ENCODE measurements at regions of chr6 and their contacts with region 1.

Region 1: GRCh38 chr6:43013843-43014433 is at the starts of genes KLHDC3 and MEA1:
- DNase-seq: peak; percentile 97 to 99
- ATAC-seq: peak; percentile 92 to 97 (median 96)
- H3K4me3 ChIP-seq: peak within 1 kb of the TSS; percentile 65 to 85 (median 76)
- H3K27ac ChIP-seq: peak within 1 kb of the TSS; percentile 47 to 90 (median 87)
- H3K4me1 ChIP-seq: peaks cover 12 to 63% (median 50%) of the 10 kb centered on the region in 9 donors
- H3K27me3 ChIP-seq: no peaks in the 10 kb centered on the region
- CTCF ChIP-seq: no peak
- total RNA-seq, gene KLHDC3: 78.2 to 165 (median 92.0) TPM
- total RNA-seq, gene MEA1: 22.9 to 38.7 (median 28.3) TPM

Region 2: DNA sequence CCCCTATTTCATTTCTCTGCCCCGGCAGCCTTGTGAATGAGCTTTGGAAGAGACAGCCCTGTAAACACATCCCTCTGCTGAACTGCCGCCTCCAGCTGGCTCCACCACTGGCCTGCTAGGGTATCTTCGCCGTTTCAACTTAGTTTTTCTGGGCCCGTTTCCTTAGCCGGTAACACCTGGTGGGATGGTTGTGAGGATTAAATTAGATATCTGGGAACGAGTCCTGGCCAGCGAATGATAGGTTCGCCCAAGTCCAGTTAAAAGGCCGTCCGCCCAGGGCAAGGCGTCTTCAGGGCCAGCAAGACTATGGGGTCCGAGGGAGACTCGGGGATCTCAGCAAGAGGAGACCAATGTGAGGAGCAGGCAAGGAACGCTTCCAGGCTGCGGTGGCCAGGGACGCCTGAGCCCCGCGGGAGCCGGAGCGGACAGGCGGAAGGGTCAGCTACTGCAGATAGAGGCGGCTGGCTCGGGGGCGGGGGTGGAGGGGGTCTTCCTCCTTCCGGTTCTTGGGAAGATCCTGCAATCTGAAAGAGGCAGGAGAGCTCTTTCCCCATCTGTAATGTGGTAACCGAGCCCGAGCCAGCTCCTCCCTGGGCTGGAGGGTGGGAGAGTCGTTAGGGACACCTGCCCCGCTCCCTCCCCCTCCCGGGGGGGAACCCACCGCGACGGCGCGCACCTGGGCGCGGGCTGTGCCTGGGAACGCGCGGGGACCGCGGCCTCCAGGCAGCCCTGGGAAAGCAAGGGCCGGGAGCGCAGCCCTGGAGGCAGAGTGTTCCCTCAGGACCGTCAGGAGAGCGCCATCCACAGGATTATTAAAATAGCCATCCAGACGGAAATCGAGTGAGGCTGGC is 102.5 kb before region 1 on chr6:
- intact Hi-C with region 1: loop called in 1 of 10 experiments (anchors 10 kb)
- DNase-seq: no peak
- ATAC-seq: no peak
- H3K4me3 ChIP-seq: peak overlapping the region in 8 of 10 donors; percentile 7 to 39 (median 36)
- H3K27ac ChIP-seq: no peak overlapping the region
- H3K4me1 ChIP-seq: peaks cover 0 to 16% (median 7%) of the 10 kb centered on the region in 9 donors
- H3K27me3 ChIP-seq: peaks cover 0 to 31% (median 19%) of the 10 kb centered on the region in 7 donors
- CTCF ChIP-seq: no peak

Region 3: GRCh38 chr6:43053545-43054205 is 39.7 kb after region 1 on chr6 and contains the start of gene CUL7:
- intact Hi-C with region 1: loop called in 6 of 10 experiments (anchors 2 to 5 kb)
- DNase-seq: peak; percentile 93 to 94
- ATAC-seq: peak; percentile 94 to 97 (median 96)
- H3K4me3 ChIP-seq: peak within 1 kb of the TSS; percentile 40 to 78 (median 64)
- H3K27ac ChIP-seq: peak within 1 kb of the TSS; percentile 63 to 98 (median 96)
- H3K4me1 ChIP-seq: peaks cover 4 to 36% (median 26%) of the 10 kb centered on the region in 9 donors
- H3K27me3 ChIP-seq: no peaks in the 10 kb centered on the region
- CTCF ChIP-seq: peak in 2 of 9 donors; percentile 3 to 20
- total RNA-seq, gene CUL7: 7.1 to 11.2 (median 8.6) TPM

Region 4: DNA sequence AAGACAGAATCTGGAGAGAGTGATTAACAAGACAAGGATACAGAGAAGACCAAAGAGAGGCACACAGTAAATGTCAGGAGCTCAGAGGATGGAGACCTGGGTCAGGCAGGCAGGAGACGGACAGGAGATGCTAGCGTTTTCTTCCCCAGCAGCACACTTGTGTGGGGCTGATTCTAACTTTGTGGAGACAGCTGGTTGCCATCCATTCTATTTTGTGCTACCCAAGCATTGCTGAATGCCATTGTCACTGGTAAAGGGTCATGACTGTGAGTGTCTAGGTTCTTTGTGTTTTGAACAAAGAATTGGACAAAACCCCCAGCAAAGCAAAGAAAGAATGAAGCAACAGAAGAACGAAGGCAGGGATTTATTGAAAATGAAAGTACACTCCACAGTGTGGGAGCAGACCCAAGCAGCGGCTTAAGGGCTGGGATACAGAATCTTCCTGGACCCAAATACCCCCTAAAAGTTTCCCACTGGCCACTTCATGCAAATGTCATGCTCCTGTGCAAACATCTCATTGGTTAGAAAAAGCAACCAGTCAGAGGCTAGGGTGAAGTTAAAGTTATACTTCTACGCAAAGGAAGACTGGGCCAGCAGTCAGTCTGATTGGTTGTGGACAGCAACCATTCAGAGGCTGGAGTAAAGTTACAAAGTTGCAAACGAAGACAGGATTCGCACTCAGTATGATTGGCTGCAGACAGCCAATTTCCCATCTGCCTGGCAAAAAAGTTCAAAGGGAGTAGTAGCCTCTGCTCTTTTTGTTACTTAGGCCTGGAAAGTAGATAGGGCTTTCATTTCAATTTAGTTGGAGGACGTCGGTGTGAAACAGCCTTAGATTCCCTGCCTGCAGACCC is 79.7 kb after region 1 on chr6:
- intact Hi-C with region 1: no loop called
- DNase-seq: peak in 1 of 2 donors; percentile 21
- ATAC-seq: peak in 7 of 8 donors; percentile 60 to 86 (median 80)
- H3K4me3 ChIP-seq: peak overlapping the region in 7 of 10 donors; percentile 13 to 42 (median 37)
- H3K27ac ChIP-seq: peak overlapping the region in 3 of 10 donors; percentile 9 to 36 (median 9)
- H3K4me1 ChIP-seq: peaks cover 0 to 21% (median 4%) of the 10 kb centered on the region in 9 donors
- H3K27me3 ChIP-seq: no peaks in the 10 kb centered on the region
- CTCF ChIP-seq: no peak

Region 5: DNA sequence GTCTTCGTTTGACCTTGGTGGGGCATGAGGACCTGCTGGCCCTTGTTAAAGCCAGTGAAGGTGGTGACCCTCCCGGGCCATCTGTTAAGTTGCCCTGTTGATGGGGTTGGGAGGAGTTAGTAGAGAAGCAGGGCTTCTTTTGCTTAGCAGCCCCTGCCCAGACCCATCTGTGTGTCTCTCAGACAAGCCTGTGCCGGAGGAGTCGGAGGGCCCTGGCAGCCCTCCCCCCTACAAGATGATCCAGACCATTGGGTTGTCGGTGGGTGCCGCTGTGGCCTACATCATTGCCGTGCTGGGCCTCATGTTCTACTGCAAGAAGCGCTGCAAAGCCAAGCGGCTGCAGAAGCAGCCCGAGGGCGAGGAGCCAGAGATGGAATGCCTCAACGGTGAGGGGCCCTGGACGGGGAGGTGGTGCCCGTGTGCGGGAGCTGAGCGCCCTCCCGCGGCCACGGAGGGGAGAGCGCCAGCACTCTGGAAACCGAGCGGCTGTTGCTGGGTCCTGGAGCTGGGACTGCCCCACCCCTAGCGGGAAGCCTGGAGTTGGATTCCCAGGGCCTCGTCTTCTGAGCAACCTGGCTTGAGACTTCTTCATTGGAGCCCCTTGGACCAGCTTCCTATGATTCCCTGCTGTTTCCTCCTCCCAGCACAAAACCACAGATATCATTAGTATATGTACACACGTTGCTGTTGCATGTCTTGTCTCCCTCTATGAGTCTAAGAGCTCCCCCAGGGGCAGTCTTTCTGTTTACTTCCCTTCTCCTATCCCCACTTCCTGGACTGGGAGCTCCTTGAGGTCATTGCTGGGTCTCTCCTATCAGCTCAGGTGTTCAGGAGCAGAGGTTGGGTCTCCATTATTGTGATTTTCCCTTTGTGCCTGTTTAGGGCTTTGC is 129.5 kb after region 1 on chr6:
- intact Hi-C with region 1: loop called in 9 of 10 experiments (anchors 1 to 5 kb)
- DNase-seq: peak; percentile 86 to 88
- ATAC-seq: peak; percentile 94 to 98 (median 96)
- H3K4me3 ChIP-seq: peak overlapping the region in 1 of 10 donors; percentile 22
- H3K27ac ChIP-seq: peak overlapping the region in 8 of 10 donors; percentile 2 to 69 (median 44)
- H3K4me1 ChIP-seq: peaks cover 7 to 23% (median 11%) of the 10 kb centered on the region in 9 donors
- H3K27me3 ChIP-seq: no peaks in the 10 kb centered on the region
- CTCF ChIP-seq: peak; percentile 84 to 99 (median 94)